IMR-90 (cell line): ENCODE measurements at regions of chr6 and their contacts with region 1.

Region 1: GRCh38 chr6:87066449-87067333 is 28.2 kb downstream of the CGA start:
- DNase-seq: peak; percentile 72
- ATAC-seq: peak; percentile 56; the same call in 1 of the 2 replicates
- H3K4me3 ChIP-seq: no peak overlapping the region
- H3K27ac ChIP-seq: no peak overlapping the region
- H3K4me1 ChIP-seq: no peaks in the 10 kb centered on the region
- H3K27me3 ChIP-seq: peaks cover 8% of the 10 kb centered on the region
- CTCF ChIP-seq: peak; percentile 78
- POLR2A ChIP-seq: 0 out of 2 replicates have a peak, but pooled peaks have one; percentile 22
- RAD21 ChIP-seq: peak; percentile 89

Region 2: GRCh38 chr6:87029711-87030314 is 36.9 kb before region 1 on chr6:
- CTCF ChIA-PET with region 1: no interaction called
- POLR2A ChIA-PET with region 1: no interaction called
- dilution Hi-C with region 1: no loop called
- in situ Hi-C with region 1: no loop called
- intact Hi-C with region 1: no loop called
- DNase-seq: peak; percentile 72
- ATAC-seq: peak; percentile 85
- H3K4me3 ChIP-seq: no peak overlapping the region
- H3K27ac ChIP-seq: no peak overlapping the region
- H3K4me1 ChIP-seq: no peaks in the 10 kb centered on the region
- H3K27me3 ChIP-seq: no peaks in the 10 kb centered on the region
- CTCF ChIP-seq: peak; percentile 60
- POLR2A ChIP-seq: no peak
- RAD21 ChIP-seq: peak; percentile 33

Region 3: DNA sequence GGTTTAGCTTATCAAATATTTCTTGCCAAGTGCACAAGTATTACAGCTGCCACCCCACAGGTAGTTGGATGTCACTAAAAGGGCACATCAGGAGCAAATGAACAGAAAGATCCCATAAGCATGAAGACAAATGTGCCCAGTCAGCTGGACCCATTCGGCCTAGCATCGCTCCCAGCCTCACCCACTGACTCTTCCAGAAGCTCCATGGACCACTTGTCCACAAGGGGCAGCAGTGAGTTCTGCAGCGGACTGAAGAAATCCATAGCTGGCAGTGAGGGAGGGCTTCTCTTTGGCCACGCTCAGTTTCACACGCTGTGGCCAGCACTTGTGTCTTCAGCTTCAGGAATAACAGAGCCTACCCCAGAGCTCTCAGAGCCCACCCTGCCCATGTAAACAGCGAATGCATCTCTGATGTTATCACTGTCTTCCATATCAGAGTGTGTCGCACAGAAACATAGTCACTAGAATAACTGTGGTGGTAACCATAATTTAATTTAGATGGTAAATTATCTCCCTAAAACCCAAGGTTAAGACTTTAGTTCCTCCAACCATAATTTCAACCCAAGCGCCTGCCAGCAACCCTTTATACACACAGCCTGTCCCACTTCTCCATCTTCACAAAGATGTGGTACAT is 12.4 kb after region 1 on chr6:
- CTCF ChIA-PET with region 1: interaction called, 42 read pairs
- POLR2A ChIA-PET with region 1: no interaction called
- dilution Hi-C with region 1: no loop called
- in situ Hi-C with region 1: no loop called
- intact Hi-C with region 1: no loop called
- DNase-seq: peak; percentile 63
- ATAC-seq: peak; percentile 94
- H3K4me3 ChIP-seq: no peak overlapping the region
- H3K27ac ChIP-seq: no peak overlapping the region
- H3K4me1 ChIP-seq: no peaks in the 10 kb centered on the region
- H3K27me3 ChIP-seq: peaks cover 6% of the 10 kb centered on the region
- CTCF ChIP-seq: peak; percentile 64
- POLR2A ChIP-seq: no peak
- RAD21 ChIP-seq: peak; percentile 52

Region 4: GRCh38 chr6:87237804-87238203 is 171.1 kb after region 1 on chr6:
- CTCF ChIA-PET with region 1: no interaction called
- POLR2A ChIA-PET with region 1: no interaction called
- dilution Hi-C with region 1: no loop called
- in situ Hi-C with region 1: no loop called
- intact Hi-C with region 1: loop called (anchors 5 kb)
- DNase-seq: peak; percentile 45
- ATAC-seq: peak; percentile 61
- H3K4me3 ChIP-seq: no peak overlapping the region
- H3K27ac ChIP-seq: no peak overlapping the region
- H3K4me1 ChIP-seq: no peaks in the 10 kb centered on the region
- H3K27me3 ChIP-seq: no peaks in the 10 kb centered on the region
- CTCF ChIP-seq: peak; percentile 55
- POLR2A ChIP-seq: no peak
- RAD21 ChIP-seq: peak; percentile 44

Region 5: GRCh38 chr6:87378947-87379346 is 312.3 kb after region 1 on chr6:
- CTCF ChIA-PET with region 1: no interaction called
- POLR2A ChIA-PET with region 1: no interaction called
- dilution Hi-C with region 1: no loop called
- in situ Hi-C with region 1: loop called (anchors 10 kb)
- intact Hi-C with region 1: no loop called
- DNase-seq: no peak
- ATAC-seq: no peak
- H3K4me3 ChIP-seq: no peak overlapping the region
- H3K27ac ChIP-seq: no peak overlapping the region
- H3K4me1 ChIP-seq: no peaks in the 10 kb centered on the region
- H3K27me3 ChIP-seq: no peaks in the 10 kb centered on the region
- CTCF ChIP-seq: no peak
- POLR2A ChIP-seq: no peak
- RAD21 ChIP-seq: no peak

Region 6: DNA sequence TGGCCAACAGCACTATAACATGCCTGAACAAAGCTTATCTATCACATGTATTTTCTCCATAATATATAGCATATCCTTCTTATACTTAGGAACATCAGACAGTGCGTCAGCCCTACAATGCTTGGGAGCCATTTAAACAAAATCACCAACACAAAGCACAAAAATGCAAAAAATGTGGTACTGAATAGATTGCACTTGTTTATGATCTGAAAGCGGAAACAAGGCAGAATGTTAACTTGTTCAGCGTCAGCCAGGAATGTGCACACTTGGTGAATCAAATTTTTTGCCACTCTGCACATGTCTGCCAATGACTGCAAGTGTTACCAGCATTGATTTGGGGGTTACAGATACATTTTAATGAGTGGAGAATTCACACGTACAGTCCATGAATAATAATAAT is 420.9 kb after region 1 on chr6:
- CTCF ChIA-PET with region 1: no interaction called
- POLR2A ChIA-PET with region 1: no interaction called
- dilution Hi-C with region 1: no loop called
- in situ Hi-C with region 1: no loop called
- intact Hi-C with region 1: loop called (anchors 5 kb)
- DNase-seq: peak; percentile 51
- ATAC-seq: peak; percentile 70
- H3K4me3 ChIP-seq: no peak overlapping the region
- H3K27ac ChIP-seq: no peak overlapping the region
- H3K4me1 ChIP-seq: no peaks in the 10 kb centered on the region; the same call in 1 of the 2 replicates
- H3K27me3 ChIP-seq: no peaks in the 10 kb centered on the region
- CTCF ChIP-seq: no peak
- POLR2A ChIP-seq: no peak
- RAD21 ChIP-seq: no peak